Mammary epithelial cell (primary cell): ENCODE measurements at regions of chr2 and their contacts with region 1.

Region 1: GRCh38 chr2:171416009-171416926 is 17.5 kb downstream of the METTL8 start:
- DNase-seq: peak; percentile 95
- H3K4me3 ChIP-seq: no peak overlapping the region
- H3K27ac ChIP-seq: peak overlapping the region; percentile 60
- H3K4me1 ChIP-seq: peaks cover 12% of the 10 kb centered on the region
- H3K27me3 ChIP-seq: no peaks in the 10 kb centered on the region
- CTCF ChIP-seq: peak; percentile 87 to 97

Region 2: GRCh38 chr2:170369894-170370293 is 1046.4 kb before region 1 on chr2:
- CTCF ChIA-PET with region 1: no interaction called
- dilution Hi-C with region 1: no loop called
- in situ Hi-C with region 1: no loop called
- intact Hi-C with region 1: loop called (anchors 10 kb)
- DNase-seq: peak; percentile 20
- H3K4me3 ChIP-seq: no peak overlapping the region
- H3K27ac ChIP-seq: no peak overlapping the region
- H3K4me1 ChIP-seq: peaks cover 11% of the 10 kb centered on the region
- H3K27me3 ChIP-seq: peaks cover 7% of the 10 kb centered on the region
- CTCF ChIP-seq: peak in 1 of 2 donors; percentile 35

Region 3: GRCh38 chr2:170973492-170974303 is 442.6 kb before region 1 on chr2:
- CTCF ChIA-PET with region 1: no interaction called
- dilution Hi-C with region 1: no loop called
- in situ Hi-C with region 1: loop called (anchors 10 kb)
- intact Hi-C with region 1: loop called (anchors 1 kb)
- DNase-seq: peak; percentile 9
- H3K4me3 ChIP-seq: peak overlapping the region; percentile 51 to 69 (median 65)
- H3K27ac ChIP-seq: peak overlapping the region; percentile 16
- H3K4me1 ChIP-seq: peaks cover 15% of the 10 kb centered on the region
- H3K27me3 ChIP-seq: no peaks in the 10 kb centered on the region
- CTCF ChIP-seq: peak; percentile 68 to 75

Region 4: DNA sequence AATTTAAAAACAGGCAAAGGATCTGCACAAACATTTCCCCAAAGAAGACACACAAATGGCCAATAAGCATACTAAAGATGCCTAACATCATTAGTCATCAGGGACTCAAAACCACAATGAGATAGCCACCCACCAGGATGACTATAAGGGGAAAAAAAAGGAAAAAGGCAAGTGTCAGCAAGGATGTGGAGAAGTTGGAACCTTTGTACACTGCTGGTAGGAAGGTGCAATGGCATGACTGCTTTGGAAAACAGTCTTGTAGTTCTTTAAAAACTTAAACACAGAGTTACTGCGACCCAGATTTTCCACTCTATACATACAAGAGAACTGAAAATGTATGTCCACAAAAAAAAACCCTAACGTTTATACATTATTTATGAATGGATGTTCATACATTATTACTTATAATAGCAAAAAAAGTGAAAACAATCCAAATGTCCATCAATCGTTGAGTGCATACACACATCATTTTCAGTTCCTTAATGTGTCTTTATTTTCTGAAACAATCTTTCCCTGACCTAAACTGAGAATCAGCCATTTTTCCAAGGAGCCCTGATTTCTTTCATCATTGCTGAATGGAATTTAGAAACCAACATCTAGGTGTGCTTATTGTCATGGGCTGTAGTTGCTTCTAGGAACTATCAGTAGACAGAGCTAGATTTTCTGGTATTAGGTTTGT is 190.8 kb before region 1 on chr2:
- CTCF ChIA-PET with region 1: no interaction called
- dilution Hi-C with region 1: no loop called
- in situ Hi-C with region 1: no loop called
- intact Hi-C with region 1: loop called (anchors 2 kb)
- DNase-seq: peak; percentile 91
- H3K4me3 ChIP-seq: peak overlapping the region in 1 of 3 experiments; percentile 20
- H3K27ac ChIP-seq: no peak overlapping the region
- H3K4me1 ChIP-seq: peaks cover 28% of the 10 kb centered on the region
- H3K27me3 ChIP-seq: no peaks in the 10 kb centered on the region
- CTCF ChIP-seq: peak; percentile 55 to 68

Region 5: DNA sequence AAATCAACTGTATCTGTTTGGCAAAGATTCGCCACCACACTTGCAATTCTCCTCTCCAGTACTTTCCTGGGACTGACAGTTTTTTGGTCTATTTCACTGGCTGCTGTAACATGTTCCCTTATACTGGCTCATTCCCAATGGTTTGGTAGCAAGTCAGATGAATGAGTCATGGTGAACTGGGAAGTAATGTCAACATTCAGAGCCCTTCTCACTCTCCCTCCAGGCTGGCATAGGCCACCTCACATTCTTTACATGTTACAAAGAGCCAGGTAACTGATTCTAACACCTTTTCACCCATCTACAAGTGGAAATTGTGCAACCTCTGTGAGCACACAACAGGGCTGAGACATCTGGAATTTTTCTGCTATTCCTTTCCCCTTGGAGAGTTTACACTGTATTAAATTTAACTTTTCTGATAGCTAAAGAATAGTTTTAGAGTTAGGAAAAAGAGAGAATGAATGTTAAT is 144.3 kb before region 1 on chr2:
- CTCF ChIA-PET with region 1: no interaction called
- dilution Hi-C with region 1: no loop called
- in situ Hi-C with region 1: no loop called
- intact Hi-C with region 1: loop called (anchors 2 kb)
- DNase-seq: peak; percentile 98
- H3K4me3 ChIP-seq: no peak overlapping the region
- H3K27ac ChIP-seq: peak overlapping the region; percentile 50
- H3K4me1 ChIP-seq: peaks cover 17% of the 10 kb centered on the region
- H3K27me3 ChIP-seq: no peaks in the 10 kb centered on the region
- CTCF ChIP-seq: no peak

Region 6: DNA sequence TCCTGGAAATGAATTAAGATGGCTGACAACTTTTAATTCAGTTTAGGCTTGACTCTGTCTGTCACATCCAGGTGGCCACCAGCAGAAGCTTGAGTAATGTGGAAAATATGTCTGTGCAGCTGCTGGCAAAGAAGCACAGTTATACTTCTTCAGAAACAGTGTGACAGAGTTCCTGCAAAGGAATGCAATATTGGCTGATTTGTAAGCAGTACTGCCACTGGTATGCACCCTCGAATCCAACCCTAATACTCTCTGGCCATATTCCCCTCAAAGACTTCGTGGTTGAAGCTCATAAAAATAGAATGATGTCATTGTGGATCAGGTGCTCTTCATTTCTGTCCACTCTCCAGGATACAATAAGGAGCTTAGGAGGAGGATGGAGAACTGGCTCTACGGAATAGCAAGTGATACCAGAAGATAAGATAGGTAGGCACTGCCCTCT is 68.7 kb before region 1 on chr2:
- CTCF ChIA-PET with region 1: no interaction called
- dilution Hi-C with region 1: no loop called
- in situ Hi-C with region 1: no loop called
- intact Hi-C with region 1: loop called (anchors 1 kb)
- DNase-seq: peak; percentile 66
- H3K4me3 ChIP-seq: no peak overlapping the region
- H3K27ac ChIP-seq: no peak overlapping the region
- H3K4me1 ChIP-seq: peaks cover 13% of the 10 kb centered on the region
- H3K27me3 ChIP-seq: no peaks in the 10 kb centered on the region
- CTCF ChIP-seq: no peak

Region 7: GRCh38 chr2:171491292-171491691 is 75.0 kb after region 1 on chr2:
- CTCF ChIA-PET with region 1: no interaction called
- dilution Hi-C with region 1: no loop called
- in situ Hi-C with region 1: no loop called
- intact Hi-C with region 1: no loop called
- DNase-seq: no peak
- H3K4me3 ChIP-seq: no peak overlapping the region
- H3K27ac ChIP-seq: no peak overlapping the region
- H3K4me1 ChIP-seq: no peaks in the 10 kb centered on the region
- H3K27me3 ChIP-seq: no peaks in the 10 kb centered on the region
- CTCF ChIP-seq: no peak